Activated CD8-positive, alpha-beta T cell treated with anti-CD3 and anti-CD28 coated beads, Interleukin-2, amount 10 ng/mL, durations not matched to agents 7 days and 5 days (primary cell): ENCODE measurements at regions of chr7 and their contacts with region 1.

Region 1: DNA sequence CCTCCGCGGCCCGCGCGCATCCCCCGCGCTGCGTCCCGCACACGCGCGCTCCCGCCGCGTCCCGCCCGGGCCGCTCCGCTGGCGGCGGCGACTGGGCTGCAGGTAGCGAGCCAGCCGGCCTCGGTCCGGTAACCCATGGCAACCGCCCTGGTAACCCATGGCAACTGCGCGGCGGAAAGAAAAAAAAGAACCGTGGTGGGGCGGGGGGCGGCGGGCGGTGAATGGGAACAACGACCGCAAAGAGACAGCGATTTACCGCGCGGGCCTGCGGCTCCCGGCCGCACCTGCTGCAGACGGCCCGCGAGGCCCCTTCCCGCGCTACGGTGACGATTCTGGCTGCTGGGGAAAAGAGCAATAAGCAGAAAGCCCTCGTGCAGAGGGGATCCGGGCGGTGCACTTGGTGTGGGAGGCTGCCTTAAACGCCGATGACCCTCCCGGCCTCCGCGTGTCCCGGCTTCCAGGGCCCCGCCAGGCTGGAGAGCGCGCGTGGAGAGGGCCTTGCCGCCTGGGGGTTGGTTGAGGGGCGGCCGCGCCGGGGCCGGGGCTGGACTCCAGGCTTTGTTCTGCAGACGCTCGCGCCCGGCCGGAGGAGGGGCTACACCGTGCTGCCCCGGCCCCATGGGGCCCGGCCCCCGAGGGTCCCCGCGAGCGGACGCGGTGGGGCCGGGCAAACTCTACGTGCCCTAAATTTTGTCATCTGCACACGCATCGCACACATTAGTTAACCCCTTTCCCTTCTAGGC is 84.7 kb downstream of the SNX10 start:
- DNase-seq: peak; percentile 48
- ATAC-seq: peak; percentile 62
- H3K4me3 Mint-ChIP-seq: peak overlapping the region; percentile 73
- H3K27ac Mint-ChIP-seq: no peak overlapping the region
- H3K4me1 Mint-ChIP-seq: peaks cover 10% of the 10 kb centered on the region
- H3K27me3 Mint-ChIP-seq: peaks cover 21% of the 10 kb centered on the region

Region 2: GRCh38 chr7:26507108-26507987 is 131.0 kb after region 1 on chr7:
- CTCF ChIA-PET with region 1: no interaction called
- POLR2A ChIA-PET with region 1: no interaction called
- DNase-seq: no peak
- ATAC-seq: no peak
- H3K4me3 Mint-ChIP-seq: no peak overlapping the region
- H3K27ac Mint-ChIP-seq: no peak overlapping the region
- H3K4me1 Mint-ChIP-seq: no peaks in the 10 kb centered on the region
- H3K27me3 Mint-ChIP-seq: peaks cover 4% of the 10 kb centered on the region

Region 3: DNA sequence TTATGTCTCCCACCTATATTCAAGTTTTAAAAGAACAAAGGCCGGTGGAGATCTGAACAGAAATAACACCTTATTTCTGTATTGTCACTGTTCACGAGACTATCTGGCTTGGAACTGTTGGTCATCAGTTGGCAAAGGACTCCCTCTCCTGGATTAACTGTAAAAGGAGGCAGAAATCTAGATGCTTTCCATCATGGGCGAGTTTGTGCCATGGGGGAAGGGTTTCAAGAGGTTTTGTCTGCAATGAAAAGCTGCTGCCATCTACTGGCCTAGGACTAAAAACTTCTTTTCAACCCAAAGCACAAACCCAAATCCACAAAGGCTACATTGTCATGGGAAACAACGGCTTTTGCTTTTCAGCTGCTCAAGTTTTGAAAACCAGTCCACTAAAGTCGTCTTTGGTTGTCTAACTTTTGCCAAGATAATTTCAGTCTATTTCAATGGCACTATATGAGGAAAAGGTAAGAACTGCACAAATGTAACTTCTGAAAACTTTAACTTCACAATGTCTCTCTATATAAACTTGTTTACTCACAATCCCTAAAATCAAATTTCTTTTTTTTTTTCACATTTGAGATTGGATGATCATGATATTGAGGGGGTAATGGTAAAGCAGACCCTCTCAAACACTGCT is 291.3 kb after region 1 on chr7:
- CTCF ChIA-PET with region 1: interaction called, 54 read pairs
- POLR2A ChIA-PET with region 1: no interaction called
- DNase-seq: peak; percentile 76
- ATAC-seq: peak; percentile 71
- H3K4me3 Mint-ChIP-seq: no peak overlapping the region
- H3K27ac Mint-ChIP-seq: no peak overlapping the region
- H3K4me1 Mint-ChIP-seq: peaks cover 12% of the 10 kb centered on the region
- H3K27me3 Mint-ChIP-seq: peaks cover 22% of the 10 kb centered on the region